Activated naive CD8-positive, alpha-beta T cell treated with anti-CD3 and anti-CD28 coated beads, Interleukin-2, amount 10 ng/mL, durations not matched to agents 7 days and 5 days (primary cell): ENCODE measurements at regions of chr11 and their contacts with region 1.

Region 1: DNA sequence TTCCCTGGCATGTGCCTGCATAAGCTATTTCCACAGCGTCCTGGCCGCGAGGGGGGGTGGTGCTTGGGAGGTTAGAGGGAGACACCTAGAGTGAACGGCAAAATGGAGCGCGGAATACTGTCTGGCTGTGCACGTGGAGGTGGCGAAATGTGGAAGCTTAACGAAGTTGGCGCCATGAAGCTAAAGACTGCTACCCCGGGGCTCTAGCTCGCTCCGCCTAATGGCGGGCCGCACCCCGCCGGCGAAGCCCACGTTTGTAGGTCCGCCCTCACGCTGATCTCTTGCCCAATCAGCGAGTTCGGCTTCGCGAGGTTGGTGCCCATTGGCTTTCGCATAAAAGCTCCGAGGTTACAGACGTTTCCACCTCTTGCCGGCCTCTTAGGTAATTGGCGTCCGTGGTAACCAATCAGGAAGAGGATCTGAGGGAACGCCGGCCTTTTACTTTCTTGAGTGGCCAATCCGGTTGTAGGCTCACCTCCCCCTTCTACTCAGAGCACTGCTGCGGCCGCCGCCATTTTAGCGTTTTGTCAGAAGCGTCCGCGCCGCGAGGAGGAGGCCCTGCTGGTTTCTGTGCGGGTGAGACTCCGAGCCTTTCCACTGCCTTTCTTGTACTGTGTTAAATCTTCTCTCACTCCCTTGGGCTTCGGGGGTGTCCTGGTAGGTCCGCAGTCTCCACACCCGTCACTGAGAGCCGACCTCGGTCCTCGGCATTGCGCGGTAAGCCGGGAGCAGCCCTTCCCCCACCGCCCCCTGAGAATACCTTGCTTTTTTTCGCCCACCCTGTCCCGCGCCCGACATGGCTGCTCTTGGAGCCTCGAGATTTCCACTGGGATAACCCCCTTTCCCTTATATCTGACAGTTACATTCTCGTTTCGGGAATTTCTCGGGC is at the start of gene RBM4:
- DNase-seq: peak; percentile 90
- ATAC-seq: peak; percentile 95
- H3K4me3 Mint-ChIP-seq: peak within 1 kb of the TSS; percentile 91
- H3K27ac Mint-ChIP-seq: peak within 1 kb of the TSS; percentile 92
- H3K4me1 Mint-ChIP-seq: peaks cover 51% of the 10 kb centered on the region
- H3K27me3 Mint-ChIP-seq: no peaks in the 10 kb centered on the region
- total RNA-seq, gene RBM4: 152 to 158 TPM

Region 2: DNA sequence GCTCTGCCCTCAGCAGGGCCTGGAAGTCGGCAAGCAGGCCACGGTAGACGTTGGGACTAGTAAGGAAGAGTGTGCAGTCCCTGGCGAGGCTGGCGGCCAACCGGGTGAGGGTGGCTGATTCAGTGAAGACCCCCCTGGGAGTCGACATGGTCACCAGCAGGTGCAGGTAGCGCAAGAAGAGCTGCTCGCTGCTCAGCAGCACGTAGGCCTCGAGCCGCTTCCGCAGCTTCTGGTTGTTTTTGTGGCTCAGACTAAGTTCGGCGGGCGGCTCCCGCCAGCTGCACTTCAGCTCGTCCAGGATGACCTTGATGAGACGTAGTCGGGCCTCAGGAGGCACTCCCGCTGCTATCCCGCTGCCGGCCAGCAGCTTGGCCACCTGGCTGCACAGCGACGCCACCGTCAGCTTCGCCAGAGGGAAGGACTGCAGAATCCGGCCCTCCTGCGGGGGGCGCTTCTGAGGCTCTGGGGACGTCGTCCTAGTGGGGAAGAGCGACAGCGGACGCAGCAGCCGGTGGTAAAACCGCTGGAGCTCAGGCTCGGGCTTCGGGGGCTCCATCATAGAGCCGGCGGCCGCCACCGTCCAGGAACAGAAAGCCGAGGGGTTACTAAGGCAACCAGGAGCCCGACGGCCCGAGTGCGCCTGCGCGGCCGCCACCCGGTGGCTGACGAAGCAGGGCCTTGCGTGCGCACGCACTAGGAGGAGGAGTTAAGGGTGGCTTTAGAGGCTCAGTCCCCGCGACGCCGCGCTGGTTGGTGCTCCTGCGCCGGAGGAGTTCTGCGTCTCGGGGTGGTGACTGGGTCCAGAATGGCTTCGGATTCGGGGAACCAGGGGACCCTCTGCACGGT is 45.7 kb before region 1 on chr11 and contains the starts of genes CCDC87 and CCS:
- POLR2A ChIA-PET with region 1: interaction called, 22 read pairs
- DNase-seq: peak; percentile 99
- ATAC-seq: peak; percentile 97
- H3K4me3 Mint-ChIP-seq: peak within 1 kb of the TSS; percentile 97
- H3K27ac Mint-ChIP-seq: peak within 1 kb of the TSS; percentile 96
- H3K4me1 Mint-ChIP-seq: peaks cover 24% of the 10 kb centered on the region
- H3K27me3 Mint-ChIP-seq: peaks cover 3% of the 10 kb centered on the region
- total RNA-seq, gene CCDC87: 0.09 to 0.14 TPM
- total RNA-seq, gene CCS: 46.6 to 47.5 TPM

Region 3: DNA sequence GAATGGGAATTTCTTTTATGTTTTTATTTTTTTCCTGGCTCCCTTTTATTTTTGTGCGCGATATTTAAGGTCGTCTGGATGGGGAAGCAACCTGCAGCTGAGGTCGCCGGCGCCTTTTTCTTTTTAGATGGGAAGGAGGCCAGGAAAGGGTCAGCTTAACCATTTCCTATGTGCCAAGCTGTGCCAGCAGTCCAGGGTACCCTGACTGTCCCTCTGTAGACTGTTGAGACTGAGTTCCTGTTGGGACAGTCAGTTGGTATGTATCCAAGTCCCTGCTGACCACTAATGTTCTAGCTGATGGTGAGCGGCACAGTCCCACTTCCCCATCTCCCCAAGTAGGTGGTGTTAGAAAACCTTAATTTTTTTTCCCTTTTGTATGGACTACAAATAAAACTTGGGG is 11.5 kb before region 1 on chr11:
- POLR2A ChIA-PET with region 1: interaction called, 211 read pairs
- DNase-seq: no peak
- ATAC-seq: no peak
- H3K4me3 Mint-ChIP-seq: no peak overlapping the region
- H3K27ac Mint-ChIP-seq: no peak overlapping the region
- H3K4me1 Mint-ChIP-seq: peaks cover 32% of the 10 kb centered on the region
- H3K27me3 Mint-ChIP-seq: no peaks in the 10 kb centered on the region

Region 4: DNA sequence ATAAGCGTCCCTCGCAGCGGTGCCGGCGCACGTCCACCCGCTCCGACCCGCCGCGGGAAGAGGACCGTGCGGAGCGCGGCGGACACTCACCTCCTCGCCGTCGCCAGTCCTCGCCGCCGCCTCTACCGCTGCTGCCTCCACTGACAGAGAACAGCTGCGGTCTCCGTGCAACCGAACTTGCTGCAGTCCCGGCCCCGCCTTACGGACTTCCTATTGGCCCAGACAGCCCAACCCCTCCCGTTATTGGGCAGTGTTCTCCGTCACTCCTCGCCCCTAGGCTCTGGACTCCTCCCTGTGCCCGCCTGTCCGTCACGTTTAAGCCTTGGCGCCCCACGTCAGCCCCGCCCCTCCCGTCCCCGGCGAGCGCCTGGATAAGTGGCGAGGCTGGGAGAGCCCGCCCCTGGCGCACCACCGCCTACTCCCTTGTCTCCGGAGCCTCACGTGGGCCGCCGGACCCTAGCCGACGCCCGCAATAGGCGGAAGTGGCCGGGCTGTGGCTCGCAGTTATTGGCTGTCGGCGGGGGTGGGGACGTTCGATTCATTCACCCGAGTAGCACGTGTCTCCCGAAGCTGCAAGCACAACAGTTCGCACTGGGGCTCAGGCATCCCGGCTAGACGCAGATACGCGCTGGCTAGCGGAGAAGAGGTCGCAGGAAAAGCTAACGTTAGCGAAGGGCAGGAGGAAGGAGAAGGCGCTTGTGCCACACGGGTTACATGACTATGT is 320.0 kb after region 1 on chr11 and contains the start of gene PC:
- POLR2A ChIA-PET with region 1: no interaction called
- DNase-seq: peak; percentile 96
- ATAC-seq: peak; percentile 97
- H3K4me3 Mint-ChIP-seq: peak within 1 kb of the TSS; percentile 90
- H3K27ac Mint-ChIP-seq: peak within 1 kb of the TSS; percentile 76
- H3K4me1 Mint-ChIP-seq: peaks cover 16% of the 10 kb centered on the region
- H3K27me3 Mint-ChIP-seq: peaks cover 12% of the 10 kb centered on the region
- total RNA-seq, gene PC: 8.2 to 9.0 TPM